Activated CD4-positive, alpha-beta T cell treated with anti-CD3 and anti-CD28 coated beads, Interleukin-2, amount 10 ng/mL, durations not matched to agents 7 days and 5 days (primary cell): ENCODE measurements at regions of chr3 and their contacts with region 1.

Region 1: DNA sequence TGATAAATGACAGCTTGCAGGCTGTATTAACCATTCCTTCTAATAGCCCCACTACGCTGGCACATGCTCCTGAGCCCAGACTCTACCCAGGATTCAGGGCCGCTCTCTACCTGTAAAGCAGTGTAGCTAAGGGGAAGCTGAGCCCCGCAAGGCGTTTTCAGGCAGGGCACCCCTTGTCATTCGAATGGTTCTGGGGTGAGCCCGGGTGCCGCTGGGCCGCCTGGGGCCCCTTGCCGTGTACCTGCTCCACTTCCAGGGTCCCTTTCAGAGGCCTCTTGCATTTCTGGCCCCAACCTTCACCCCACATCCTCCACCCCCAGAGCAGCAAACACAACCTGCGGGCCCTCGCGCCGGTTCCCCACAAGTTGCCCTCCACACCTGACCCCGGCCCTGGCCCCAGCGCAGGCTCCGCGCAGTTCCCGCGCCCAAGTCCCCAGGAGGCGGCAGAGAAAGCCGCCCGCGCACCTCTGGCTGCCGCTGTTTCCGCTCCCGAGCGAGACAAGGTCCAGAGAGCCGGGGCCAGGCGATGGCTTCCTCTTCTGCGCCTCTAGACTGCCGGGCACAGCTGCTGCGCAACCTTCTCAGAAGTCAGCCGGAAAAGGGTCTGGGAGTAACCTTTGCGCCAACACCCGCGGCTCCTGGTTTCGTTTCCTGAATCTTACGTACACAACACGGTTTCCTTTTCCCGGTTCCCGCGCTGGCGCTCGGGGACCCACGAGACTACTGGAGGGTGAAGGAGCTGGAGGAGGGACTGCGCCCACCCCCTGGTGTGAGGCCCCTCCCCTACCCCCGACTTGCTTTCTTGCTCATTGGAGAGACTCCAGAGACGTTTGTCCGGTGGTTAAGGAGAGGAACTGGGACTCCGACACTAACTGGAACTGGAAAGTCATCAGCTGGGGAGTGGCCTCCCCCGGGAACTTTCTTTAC is at the start of gene PLSCR1:
- DNase-seq: peak; percentile 90
- H3K4me3 Mint-ChIP-seq: peak within 1 kb of the TSS; percentile 86
- H3K27ac Mint-ChIP-seq: peak within 1 kb of the TSS; percentile 94
- H3K4me1 Mint-ChIP-seq: peaks cover 74% of the 10 kb centered on the region
- H3K27me3 Mint-ChIP-seq: peaks cover 3% of the 10 kb centered on the region
- total RNA-seq, gene PLSCR1: 137 to 146 TPM

Region 2: DNA sequence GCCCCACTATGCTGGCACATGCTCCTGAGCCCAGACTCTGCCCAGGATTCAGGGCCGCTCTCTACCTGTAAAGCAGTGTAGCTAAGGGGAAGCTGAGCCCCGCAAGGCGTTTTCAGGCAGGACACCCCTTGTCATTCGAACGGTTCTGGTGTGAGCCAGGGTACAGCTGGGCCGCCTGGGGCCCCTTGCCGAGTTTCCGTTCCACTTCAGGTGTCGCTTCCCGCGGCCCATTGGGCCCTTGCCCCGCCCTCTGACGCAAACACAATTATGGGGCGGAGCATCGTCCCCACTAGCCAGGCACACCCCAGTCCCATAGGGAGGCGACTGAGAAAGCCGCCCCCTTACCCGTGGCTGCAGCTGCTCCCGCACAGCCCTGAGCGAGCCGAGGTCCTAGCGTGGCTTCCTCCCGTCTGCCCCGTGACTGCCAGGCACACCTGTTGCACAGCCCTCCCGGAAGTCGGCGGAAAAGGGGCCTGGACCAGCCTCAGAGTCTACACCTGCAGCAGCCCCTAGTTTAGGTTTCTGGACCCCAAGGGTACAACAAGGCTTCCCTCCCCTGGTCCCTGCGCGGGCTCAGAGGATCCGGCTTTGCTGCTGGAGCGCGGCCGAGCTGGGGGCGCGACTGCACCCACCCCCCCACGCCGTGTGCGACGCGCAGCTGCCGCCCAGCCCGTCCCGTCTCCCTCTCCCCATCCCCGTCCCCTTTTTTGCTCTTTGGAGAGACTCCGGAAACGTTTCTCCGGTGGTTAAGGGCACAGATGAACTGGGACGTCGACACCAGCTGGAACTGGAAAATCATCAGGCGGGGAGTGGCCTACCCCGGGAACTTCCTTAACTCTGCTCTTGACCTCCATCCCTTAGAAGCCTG is 74.9 kb before region 1 on chr3 and contains the start of gene PLSCR2:
- CTCF ChIA-PET with region 1: no interaction called
- POLR2A ChIA-PET with region 1: interaction called, 10 read pairs
- DNase-seq: peak; percentile 72
- H3K4me3 Mint-ChIP-seq: peak within 1 kb of the TSS; percentile 72
- H3K27ac Mint-ChIP-seq: peak within 1 kb of the TSS; percentile 87
- H3K4me1 Mint-ChIP-seq: peaks cover 17% of the 10 kb centered on the region
- H3K27me3 Mint-ChIP-seq: peaks cover 6% of the 10 kb centered on the region
- total RNA-seq, gene PLSCR2: 0.35 TPM in 1 of 2 experiments, not detected in the other

Region 3: GRCh38 chr3:146503461-146504202 is 40.6 kb before region 1 on chr3:
- CTCF ChIA-PET with region 1: no interaction called
- POLR2A ChIA-PET with region 1: no interaction called
- DNase-seq: no peak
- H3K4me3 Mint-ChIP-seq: no peak overlapping the region
- H3K27ac Mint-ChIP-seq: no peak overlapping the region
- H3K4me1 Mint-ChIP-seq: peaks cover 25% of the 10 kb centered on the region
- H3K27me3 Mint-ChIP-seq: no peaks in the 10 kb centered on the region

Region 4: GRCh38 chr3:146517684-146518435 is 26.4 kb before region 1 on chr3:
- CTCF ChIA-PET with region 1: interaction called, 10 read pairs
- POLR2A ChIA-PET with region 1: no interaction called
- DNase-seq: no peak
- H3K4me3 Mint-ChIP-seq: no peak overlapping the region
- H3K27ac Mint-ChIP-seq: no peak overlapping the region
- H3K4me1 Mint-ChIP-seq: peaks cover 23% of the 10 kb centered on the region
- H3K27me3 Mint-ChIP-seq: no peaks in the 10 kb centered on the region

Region 5: DNA sequence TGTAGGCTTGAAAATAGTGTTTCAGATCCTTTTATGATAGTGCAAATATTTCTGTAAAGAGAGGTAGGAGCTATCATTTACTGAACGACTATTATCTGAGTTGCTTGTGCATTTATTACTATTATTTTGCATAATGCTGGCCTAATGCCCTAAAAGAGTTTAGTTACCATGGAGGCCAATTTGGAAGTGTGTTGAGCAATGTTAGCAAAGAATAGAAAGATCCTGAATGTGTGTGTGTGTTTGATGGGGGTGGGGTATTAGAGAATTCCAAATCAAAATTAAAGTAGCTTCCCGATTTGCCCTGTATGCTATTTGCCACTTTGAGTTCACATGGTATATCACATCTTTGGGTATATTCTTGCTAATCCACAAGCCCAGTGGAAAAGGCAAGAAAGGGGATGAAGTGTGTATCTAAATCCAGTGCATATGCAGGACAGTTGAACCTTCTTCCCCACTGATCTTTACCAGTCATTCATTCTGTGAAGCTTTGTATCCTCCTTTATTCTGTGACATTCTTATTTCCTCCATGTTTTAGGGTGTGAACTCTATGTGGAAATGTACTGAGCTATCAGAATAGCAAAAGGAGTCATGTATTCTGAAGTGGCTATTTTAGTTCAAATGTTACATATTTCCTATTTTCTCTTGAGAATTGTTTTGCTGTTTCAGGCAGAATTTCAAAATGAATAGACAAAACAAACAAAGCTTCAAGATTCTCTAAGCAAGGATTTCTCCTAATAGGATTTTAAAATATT is 106.6 kb after region 1 on chr3:
- CTCF ChIA-PET with region 1: no interaction called
- POLR2A ChIA-PET with region 1: no interaction called
- DNase-seq: no peak
- H3K4me3 Mint-ChIP-seq: no peak overlapping the region
- H3K27ac Mint-ChIP-seq: no peak overlapping the region
- H3K4me1 Mint-ChIP-seq: no peaks in the 10 kb centered on the region
- H3K27me3 Mint-ChIP-seq: no peaks in the 10 kb centered on the region